Left colon (tissue), 2 donors: ENCODE measurements at regions of chr4 and their contacts with region 1.

Region 1: GRCh38 chr4:123390846-123391456 is 5.6 kb upstream of the SPRY1 start:
- DNase-seq: no peak
- ATAC-seq: no peak

Region 2: DNA sequence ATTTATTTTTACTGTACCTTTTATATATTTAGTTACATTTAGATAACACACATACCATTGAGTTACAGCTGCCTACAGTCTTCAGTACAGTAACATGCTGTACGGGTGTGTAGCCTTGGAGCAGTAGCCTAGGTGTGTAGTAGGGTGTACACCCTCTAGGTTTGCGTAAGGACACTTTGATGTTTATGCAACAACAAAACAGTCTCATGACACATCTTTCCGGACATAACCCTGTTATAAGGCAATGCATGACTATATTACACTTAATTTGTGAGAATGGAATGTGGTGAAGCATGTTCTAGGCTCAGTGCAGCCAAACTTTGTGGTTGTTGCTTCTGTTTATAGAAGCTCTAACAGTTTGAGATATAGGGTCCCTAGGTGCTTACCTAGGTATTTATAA is 71.0 kb after region 1 on chr4:
- intact Hi-C with region 1: no loop called
- DNase-seq: no peak
- ATAC-seq: no peak

Region 3: DNA sequence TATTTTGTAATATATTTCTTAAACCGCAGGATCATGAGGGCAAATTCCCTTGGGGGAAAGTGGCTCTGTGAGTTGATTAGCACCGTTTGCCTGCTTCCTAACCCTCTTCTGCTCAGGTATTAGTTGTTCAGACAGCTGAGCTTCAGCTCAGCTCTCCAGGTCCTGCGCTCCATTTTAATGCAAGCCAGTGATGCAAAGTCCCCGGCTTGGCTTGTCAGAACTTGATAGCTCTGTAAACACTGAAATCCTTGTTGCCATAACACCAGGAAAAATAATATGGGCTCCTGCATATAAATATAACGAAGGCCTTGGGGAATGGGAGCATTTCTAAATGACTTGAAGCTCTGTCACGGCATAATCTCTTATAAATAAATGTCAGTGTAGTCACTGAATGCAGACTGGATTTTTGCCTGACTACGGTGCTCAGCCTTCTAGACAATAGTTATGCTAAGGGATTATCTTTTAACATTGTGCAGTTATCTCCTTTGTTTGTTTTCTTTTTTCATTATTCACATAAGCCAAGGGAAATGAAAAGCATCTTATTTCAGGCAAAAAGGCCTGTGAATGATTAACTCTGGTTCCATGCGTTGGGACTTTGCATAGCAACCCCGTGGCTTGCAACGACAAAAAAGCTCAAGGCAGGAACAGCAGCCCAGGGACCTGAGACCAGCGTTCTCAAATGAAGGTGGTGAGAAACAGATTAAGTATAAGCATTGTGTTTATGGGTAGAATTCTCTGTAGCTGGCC is 258.9 kb after region 1 on chr4:
- intact Hi-C with region 1: loop called in 1 of 2 experiments (anchors 5 kb)
- DNase-seq: peak; percentile 44 to 57
- ATAC-seq: peak; percentile 82